Activated B cell treated with CpG ODN at 0.5 μM for 24 hours (primary cell): ENCODE measurements at regions of chr2 and their contacts with region 1.

Region 1: DNA sequence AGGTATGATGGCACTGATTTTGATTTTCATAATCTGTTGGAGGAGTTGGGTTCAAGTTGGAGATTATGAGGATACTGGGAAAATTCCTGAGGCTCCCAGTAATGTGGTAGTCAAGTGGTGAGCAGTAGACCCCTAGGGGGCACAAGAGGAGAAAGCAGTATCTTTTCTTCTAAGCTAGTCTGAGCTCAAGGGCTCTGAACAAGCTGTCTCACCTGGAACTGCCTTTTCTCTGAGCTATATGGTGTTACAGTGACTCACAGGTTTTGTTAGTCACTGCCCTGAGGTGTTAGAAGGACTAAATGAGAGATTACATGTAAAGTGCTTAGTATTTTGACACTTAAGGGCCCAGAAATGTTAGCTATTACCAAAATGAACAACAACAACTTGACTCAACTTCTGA is 42.2 kb downstream of the CD302 start:
- DNase-seq: no peak
- ATAC-seq: no peak
- H3K4me3 Mint-ChIP-seq: no peak overlapping the region
- H3K27ac Mint-ChIP-seq: no peak overlapping the region
- H3K4me1 Mint-ChIP-seq: no peaks in the 10 kb centered on the region
- H3K27me3 Mint-ChIP-seq: no peaks in the 10 kb centered on the region
- CTCF ChIP-seq: no peak

Region 2: DNA sequence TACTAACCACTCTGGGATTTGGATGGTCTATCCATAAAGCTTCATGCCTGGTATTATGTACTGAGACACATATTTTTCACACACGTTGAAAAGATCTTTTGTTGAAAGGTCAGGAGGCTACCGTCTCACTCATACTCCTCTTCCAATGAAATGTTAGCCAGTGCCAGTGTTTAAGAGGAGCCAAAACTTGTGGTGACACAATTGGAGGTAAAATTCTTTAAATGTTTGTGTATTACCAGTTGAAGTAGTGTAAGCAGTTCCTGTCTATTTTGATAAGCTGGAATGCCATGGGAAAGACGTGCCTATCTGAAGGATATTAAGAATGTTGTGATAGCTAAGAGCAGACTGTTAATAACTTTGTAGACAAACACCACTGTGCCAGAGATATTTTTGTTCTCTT is 11.4 kb before region 1 on chr2:
- CTCF ChIA-PET with region 1: no interaction called
- POLR2A ChIA-PET with region 1: interaction called, 3 read pairs
- intact Hi-C with region 1: loop called (anchors 1 kb)
- DNase-seq: no peak
- ATAC-seq: no peak
- H3K4me3 Mint-ChIP-seq: no peak overlapping the region
- H3K27ac Mint-ChIP-seq: no peak overlapping the region
- H3K4me1 Mint-ChIP-seq: no peaks in the 10 kb centered on the region
- H3K27me3 Mint-ChIP-seq: no peaks in the 10 kb centered on the region
- CTCF ChIP-seq: no peak

Region 3: GRCh38 chr2:159921752-159922404 is 166.1 kb after region 1 on chr2:
- CTCF ChIA-PET with region 1: no interaction called
- POLR2A ChIA-PET with region 1: no interaction called
- intact Hi-C with region 1: loop called (anchors 5 kb)
- DNase-seq: peak; percentile 65
- ATAC-seq: peak; percentile 97
- H3K4me3 Mint-ChIP-seq: no peak overlapping the region
- H3K27ac Mint-ChIP-seq: peak overlapping the region; percentile 6
- H3K4me1 Mint-ChIP-seq: peaks cover 28% of the 10 kb centered on the region
- H3K27me3 Mint-ChIP-seq: no peaks in the 10 kb centered on the region
- CTCF ChIP-seq: no peak

Region 4: GRCh38 chr2:159939946-159940345 is 184.2 kb after region 1 on chr2:
- CTCF ChIA-PET with region 1: no interaction called
- POLR2A ChIA-PET with region 1: no interaction called
- intact Hi-C with region 1: loop called (anchors 1 kb)
- DNase-seq: no peak
- ATAC-seq: peak; percentile 54
- H3K4me3 Mint-ChIP-seq: no peak overlapping the region
- H3K27ac Mint-ChIP-seq: no peak overlapping the region
- H3K4me1 Mint-ChIP-seq: peaks cover 8% of the 10 kb centered on the region
- H3K27me3 Mint-ChIP-seq: no peaks in the 10 kb centered on the region
- CTCF ChIP-seq: no peak

Region 5: DNA sequence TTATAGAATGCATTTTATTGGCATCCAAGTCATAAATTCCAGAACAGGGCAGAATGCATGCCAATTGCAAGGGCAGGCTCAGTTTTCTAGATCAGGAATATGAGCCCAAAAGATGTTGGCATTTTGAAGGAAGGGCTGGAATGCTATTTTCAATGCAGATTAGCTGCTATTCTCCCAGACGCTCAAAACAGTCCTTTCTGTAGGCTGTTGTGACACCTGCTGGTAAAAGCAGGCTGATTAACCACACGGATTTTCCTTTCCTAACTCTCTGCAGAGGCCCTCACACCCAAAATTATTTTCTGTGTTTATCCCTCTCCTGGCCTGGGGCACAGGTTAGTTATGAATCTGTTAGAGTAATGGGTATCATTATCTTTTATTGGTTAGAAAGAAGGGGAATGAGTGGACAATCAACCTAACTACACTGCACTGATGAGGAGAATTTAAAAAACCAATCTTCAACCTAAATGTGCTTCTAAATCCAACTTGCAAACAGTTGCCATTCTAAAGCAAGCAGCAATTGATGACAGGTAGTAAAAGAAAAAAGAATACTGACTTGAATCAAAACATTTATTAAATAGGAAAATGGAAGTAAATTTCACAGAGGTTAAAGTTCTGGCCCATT is 212.6 kb after region 1 on chr2:
- CTCF ChIA-PET with region 1: interaction called, 6 read pairs
- POLR2A ChIA-PET with region 1: no interaction called
- intact Hi-C with region 1: loop called (anchors 2 kb)
- DNase-seq: no peak
- ATAC-seq: no peak
- H3K4me3 Mint-ChIP-seq: no peak overlapping the region
- H3K27ac Mint-ChIP-seq: no peak overlapping the region
- H3K4me1 Mint-ChIP-seq: peaks cover 9% of the 10 kb centered on the region
- H3K27me3 Mint-ChIP-seq: no peaks in the 10 kb centered on the region
- CTCF ChIP-seq: no peak